ENCODE measurements at regions of chr9 and their contacts with region 1.

Region 1: DNA sequence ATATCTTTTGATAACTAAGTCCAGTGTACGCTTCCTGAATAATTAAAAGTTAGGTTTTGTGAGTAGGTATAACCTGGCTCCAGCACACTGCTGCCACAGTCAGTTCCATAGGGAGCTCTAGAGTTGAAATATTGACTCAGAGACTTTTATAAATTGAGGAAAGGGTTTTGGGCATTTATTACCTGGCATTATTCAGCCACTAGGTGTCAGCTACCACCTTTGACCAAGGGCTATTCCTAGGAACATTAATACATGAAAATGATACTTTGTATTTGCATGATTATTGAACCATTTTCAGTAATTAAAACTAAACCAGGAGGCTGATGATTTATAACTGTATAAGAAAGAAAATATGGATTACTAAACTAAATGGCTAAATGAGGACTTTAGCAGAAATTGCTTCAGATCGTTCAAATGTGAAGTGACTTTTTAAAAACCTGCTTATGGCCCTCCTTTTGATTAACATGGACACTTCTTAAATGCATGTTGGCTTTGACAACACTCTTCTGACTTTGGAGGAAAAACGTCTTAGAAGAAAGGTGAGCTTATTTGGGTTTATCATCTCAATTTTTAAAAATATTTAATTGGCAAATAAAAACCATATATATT is 83.0 kb downstream of the SMC2 start:
- DNase-seq: peak; percentile 7
- H3K4me3 ChIP-seq: no peak overlapping the region
- H3K27ac ChIP-seq: no peak overlapping the region
- H3K4me1 ChIP-seq: no peaks in the 10 kb centered on the region
- H3K27me3 ChIP-seq: no peaks in the 10 kb centered on the region
- CTCF ChIP-seq: peak; percentile 45

Region 2: DNA sequence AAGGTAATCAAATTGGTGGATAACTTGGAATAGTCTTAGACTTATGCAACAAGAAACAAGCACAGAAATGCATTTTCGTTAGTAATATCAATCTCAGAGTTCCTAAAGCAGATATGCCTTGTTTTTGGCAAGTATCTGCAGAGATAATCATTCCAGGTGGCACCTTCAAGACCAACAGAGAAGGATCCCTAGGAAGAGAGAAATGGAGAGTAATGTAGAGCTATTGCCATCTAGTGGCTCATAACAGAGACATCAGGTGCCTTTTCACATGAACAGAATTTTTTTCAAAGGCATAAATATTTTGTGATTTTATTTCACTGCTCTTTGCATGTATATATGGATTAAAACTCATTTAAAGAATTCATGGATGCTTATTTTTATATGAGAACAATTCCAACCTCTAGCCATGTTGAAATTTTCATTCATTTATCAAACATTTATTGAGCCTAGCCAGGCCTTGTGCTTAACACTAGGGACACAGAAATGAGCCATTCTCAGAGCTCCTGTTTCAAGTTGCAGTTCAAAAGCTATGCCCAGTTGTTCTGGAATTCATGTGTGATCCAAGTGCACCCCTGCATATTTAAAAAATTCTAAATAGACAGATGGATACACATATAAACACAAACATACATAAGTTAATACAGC is 209.4 kb after region 1 on chr9:
- CTCF ChIA-PET with region 1: interaction called, 7 read pairs
- POLR2A ChIA-PET with region 1: no interaction called
- intact Hi-C with region 1: loop called (anchors 2 kb)
- DNase-seq: peak; percentile 49
- H3K4me3 ChIP-seq: no peak overlapping the region
- H3K27ac ChIP-seq: no peak overlapping the region
- H3K4me1 ChIP-seq: no peaks in the 10 kb centered on the region
- H3K27me3 ChIP-seq: no peaks in the 10 kb centered on the region
- CTCF ChIP-seq: peak; percentile 67

Region 3: DNA sequence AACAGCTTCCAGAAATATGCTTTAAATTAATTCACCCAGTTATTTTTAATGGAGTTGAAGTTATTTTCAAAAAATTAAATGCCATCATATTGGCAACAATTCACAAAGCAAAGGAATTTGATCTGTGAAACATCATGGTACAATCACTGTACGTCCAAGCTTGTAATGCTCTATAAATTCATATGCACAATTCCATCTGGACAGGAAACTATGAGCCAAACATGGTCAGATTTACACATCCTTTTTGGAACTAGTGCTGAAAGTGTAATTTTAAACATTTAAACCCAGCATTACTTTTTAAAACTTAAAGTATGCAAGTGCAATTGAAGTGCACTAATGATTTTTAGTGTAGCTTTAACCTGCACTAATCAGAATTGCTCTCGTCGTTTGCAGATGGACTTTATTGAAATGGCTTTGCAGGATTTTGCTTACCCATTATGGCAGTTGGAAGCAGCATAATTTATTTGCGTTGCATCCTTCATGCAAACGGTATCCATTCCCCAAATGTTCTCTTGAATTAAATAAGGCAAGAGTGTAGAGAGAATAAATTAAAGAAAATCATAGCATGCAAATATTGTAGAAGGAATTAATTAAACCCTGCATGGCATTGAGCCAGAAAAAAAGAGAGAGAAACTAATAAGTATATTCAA is 305.9 kb after region 1 on chr9:
- CTCF ChIA-PET with region 1: no interaction called
- POLR2A ChIA-PET with region 1: no interaction called
- intact Hi-C with region 1: loop called (anchors 10 kb)
- DNase-seq: no peak
- H3K4me3 ChIP-seq: no peak overlapping the region
- H3K27ac ChIP-seq: no peak overlapping the region
- H3K4me1 ChIP-seq: no peaks in the 10 kb centered on the region
- H3K27me3 ChIP-seq: no peaks in the 10 kb centered on the region
- CTCF ChIP-seq: no peak

Region 4: GRCh38 chr9:104682642-104683041 is 505.5 kb after region 1 on chr9:
- CTCF ChIA-PET with region 1: no interaction called
- POLR2A ChIA-PET with region 1: no interaction called
- intact Hi-C with region 1: loop called (anchors 10 kb)
- DNase-seq: peak; percentile 67
- H3K4me3 ChIP-seq: no peak overlapping the region
- H3K27ac ChIP-seq: no peak overlapping the region
- H3K4me1 ChIP-seq: no peaks in the 10 kb centered on the region
- H3K27me3 ChIP-seq: no peaks in the 10 kb centered on the region
- CTCF ChIP-seq: peak; percentile 58

Measured in A673 (cell line).